ENCODE measurements at regions of chr16 and their contacts with region 1.

Region 1: GRCh38 chr16:67561824-67562525 is 351 bp upstream of the CTCF start:
- DNase-seq: peak; percentile 97
- ATAC-seq: peak; percentile 77
- H3K4me3 Mint-ChIP-seq: peak overlapping the region; percentile 91
- H3K27ac Mint-ChIP-seq: peak overlapping the region; percentile 91
- H3K4me1 Mint-ChIP-seq: peaks cover 61% of the 10 kb centered on the region
- H3K27me3 Mint-ChIP-seq: no peaks in the 10 kb centered on the region
- CTCF ChIP-seq: no peak

Region 2: GRCh38 chr16:67226804-67227557 is 335.0 kb before region 1 on chr16 and contains the start of gene TMEM208:
- CTCF ChIA-PET with region 1: no interaction called
- POLR2A ChIA-PET with region 1: no interaction called
- intact Hi-C with region 1: loop called (anchors 1 kb)
- DNase-seq: peak; percentile 98
- ATAC-seq: peak; percentile 98
- H3K4me3 Mint-ChIP-seq: peak within 1 kb of the TSS; percentile 100
- H3K27ac Mint-ChIP-seq: peak within 1 kb of the TSS; percentile 99
- H3K4me1 Mint-ChIP-seq: peaks cover 27% of the 10 kb centered on the region
- H3K27me3 Mint-ChIP-seq: no peaks in the 10 kb centered on the region
- CTCF ChIP-seq: no peak
- total RNA-seq, gene TMEM208: 37.1 and 41.3 TPM in 2 replicates

Region 3: DNA sequence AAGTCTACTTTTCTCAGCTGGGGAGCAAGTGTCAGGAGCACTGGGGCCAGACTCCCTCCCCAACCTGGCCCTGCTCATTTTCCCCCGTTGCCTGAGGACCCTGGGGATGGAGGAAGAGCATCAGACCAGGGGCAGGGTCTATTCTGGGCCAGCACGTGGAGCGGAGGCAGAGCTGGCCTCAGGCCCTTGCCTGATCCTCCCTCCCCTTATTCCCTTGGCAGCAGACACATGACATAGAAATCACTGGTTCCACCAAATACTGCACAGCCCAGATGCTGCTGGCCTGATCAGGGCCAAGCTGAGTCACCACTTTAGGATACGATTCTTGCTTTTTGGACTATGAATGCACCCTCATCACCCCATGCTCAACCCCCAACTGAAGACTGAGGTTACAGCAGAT is 62.9 kb before region 1 on chr16:
- CTCF ChIA-PET with region 1: interaction called, 4 read pairs
- POLR2A ChIA-PET with region 1: no interaction called
- intact Hi-C with region 1: loop called (anchors 1 kb)
- DNase-seq: no peak
- ATAC-seq: no peak
- H3K4me3 Mint-ChIP-seq: no peak overlapping the region
- H3K27ac Mint-ChIP-seq: no peak overlapping the region
- H3K4me1 Mint-ChIP-seq: peaks cover 28% of the 10 kb centered on the region
- H3K27me3 Mint-ChIP-seq: no peaks in the 10 kb centered on the region
- CTCF ChIP-seq: no peak

Region 4: GRCh38 chr16:67546761-67547422 is 15.1 kb before region 1 on chr16:
- CTCF ChIA-PET with region 1: interaction called, 200 read pairs
- POLR2A ChIA-PET with region 1: interaction called, 133 read pairs
- intact Hi-C with region 1: loop called (anchors 1 kb)
- DNase-seq: peak; percentile 73
- ATAC-seq: no peak
- H3K4me3 Mint-ChIP-seq: peak overlapping the region; percentile 58
- H3K27ac Mint-ChIP-seq: peak overlapping the region; percentile 95
- H3K4me1 Mint-ChIP-seq: peaks cover 87% of the 10 kb centered on the region
- H3K27me3 Mint-ChIP-seq: no peaks in the 10 kb centered on the region
- CTCF ChIP-seq: peak; percentile 95

Region 5: GRCh38 chr16:67667817-67668494 is 106.0 kb after region 1 on chr16:
- CTCF ChIA-PET with region 1: interaction called, 3 read pairs
- POLR2A ChIA-PET with region 1: interaction called, 9 read pairs
- intact Hi-C with region 1: loop called (anchors 1 kb)
- DNase-seq: peak; percentile 66
- ATAC-seq: peak; percentile 84
- H3K4me3 Mint-ChIP-seq: peak overlapping the region; percentile 87
- H3K27ac Mint-ChIP-seq: peak overlapping the region; percentile 85
- H3K4me1 Mint-ChIP-seq: peaks cover 49% of the 10 kb centered on the region
- H3K27me3 Mint-ChIP-seq: no peaks in the 10 kb centered on the region
- CTCF ChIP-seq: no peak

Region 6: GRCh38 chr16:67841764-67842508 is 280.0 kb after region 1 on chr16 and contains the start of gene THAP11:
- CTCF ChIA-PET with region 1: interaction called, 3 read pairs
- POLR2A ChIA-PET with region 1: no interaction called
- intact Hi-C with region 1: loop called (anchors 1 kb)
- DNase-seq: peak; percentile 95
- ATAC-seq: peak; percentile 54
- H3K4me3 Mint-ChIP-seq: peak within 1 kb of the TSS; percentile 95
- H3K27ac Mint-ChIP-seq: peak within 1 kb of the TSS; percentile 95
- H3K4me1 Mint-ChIP-seq: peaks cover 43% of the 10 kb centered on the region
- H3K27me3 Mint-ChIP-seq: no peaks in the 10 kb centered on the region
- CTCF ChIP-seq: peak; percentile 38
- total RNA-seq, gene THAP11: 24.2 and 24.9 TPM in 2 replicates

Region 7: GRCh38 chr16:67872786-67873537 is 311.0 kb after region 1 on chr16 and contains the start of gene EDC4:
- CTCF ChIA-PET with region 1: no interaction called
- POLR2A ChIA-PET with region 1: no interaction called
- intact Hi-C with region 1: no loop called
- DNase-seq: peak; percentile 89
- ATAC-seq: peak; percentile 93
- H3K4me3 Mint-ChIP-seq: peak within 1 kb of the TSS; percentile 90
- H3K27ac Mint-ChIP-seq: peak within 1 kb of the TSS; percentile 84
- H3K4me1 Mint-ChIP-seq: peaks cover 36% of the 10 kb centered on the region
- H3K27me3 Mint-ChIP-seq: no peaks in the 10 kb centered on the region
- CTCF ChIP-seq: no peak
- total RNA-seq, gene EDC4: 71.5 TPM in 2 replicates